ENCODE measurements at regions of chr2 and their contacts with region 1.

Region 1: GRCh38 chr2:119579424-119580295 is 35.4 kb downstream of the CFAP221 start:
- DNase-seq: no peak
- H3K4me3 Mint-ChIP-seq: no peak overlapping the region
- H3K27ac Mint-ChIP-seq: no peak overlapping the region
- H3K4me1 Mint-ChIP-seq: no peaks in the 10 kb centered on the region
- H3K27me3 Mint-ChIP-seq: no peaks in the 10 kb centered on the region
- CTCF ChIP-seq: no peak

Region 2: DNA sequence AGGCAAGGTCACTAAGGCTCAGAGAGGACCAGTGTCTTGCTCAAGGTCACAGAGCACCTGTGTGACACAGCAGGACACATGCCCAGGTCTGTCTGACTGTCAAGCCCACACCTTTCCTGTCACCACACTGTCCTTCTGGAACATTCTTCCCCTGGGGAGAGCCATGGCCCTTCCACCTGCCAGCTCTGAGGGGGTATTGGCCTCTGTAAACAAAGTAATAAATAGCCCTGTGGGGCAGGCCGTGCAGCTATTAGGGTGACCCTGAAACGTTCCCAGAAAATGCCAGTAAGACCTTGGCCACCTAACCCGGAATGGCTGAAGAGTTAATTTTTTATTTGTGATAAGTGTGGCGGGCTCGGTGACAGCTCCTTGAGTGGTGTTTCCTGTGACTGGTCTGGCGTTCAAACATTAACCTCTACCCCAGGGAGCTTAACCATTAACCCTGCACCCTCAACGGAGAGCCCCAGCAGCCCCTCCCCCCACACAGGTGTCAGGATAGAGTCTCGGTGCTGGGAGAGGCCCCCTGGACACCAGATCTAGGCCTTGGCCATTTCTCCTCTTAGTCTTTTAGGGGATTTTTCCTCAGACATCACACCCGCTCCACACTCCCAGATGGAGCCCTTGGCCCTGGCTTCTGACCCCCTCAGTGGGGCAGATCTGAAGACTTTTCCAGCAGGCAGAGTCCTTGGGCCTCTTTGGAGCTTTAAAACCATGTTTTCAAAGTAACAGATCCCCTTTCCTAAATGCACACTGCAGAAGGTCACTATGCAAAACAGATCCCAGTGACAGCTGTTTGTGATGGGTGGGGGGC is 92.0 kb before region 1 on chr2:
- CTCF ChIA-PET with region 1: no interaction called
- intact Hi-C with region 1: no loop called
- DNase-seq: peak; percentile 87
- H3K4me3 Mint-ChIP-seq: peak overlapping the region; percentile 39
- H3K27ac Mint-ChIP-seq: peak overlapping the region; percentile 58
- H3K4me1 Mint-ChIP-seq: peaks cover 91% of the 10 kb centered on the region
- H3K27me3 Mint-ChIP-seq: no peaks in the 10 kb centered on the region
- CTCF ChIP-seq: no peak

Region 3: DNA sequence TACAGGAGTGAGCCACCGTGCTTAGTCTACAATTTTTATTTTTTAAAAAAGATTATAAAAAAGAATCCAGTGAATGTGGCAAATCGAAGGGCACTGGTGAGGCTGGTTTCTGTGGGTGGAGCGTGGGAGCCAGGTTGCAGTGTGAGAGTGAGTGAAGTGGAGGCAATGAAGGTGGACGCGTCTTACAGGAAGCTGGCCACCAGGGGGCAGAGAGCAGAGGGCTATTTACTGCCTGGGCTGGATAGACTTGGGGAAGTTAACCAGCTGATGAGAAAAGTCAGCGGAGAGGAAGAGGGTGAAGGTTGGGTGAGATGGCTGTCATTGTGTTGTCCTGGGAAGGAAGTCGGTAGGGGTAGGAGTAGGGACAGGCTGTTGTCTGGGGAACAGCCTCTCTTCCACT is 62.2 kb before region 1 on chr2:
- CTCF ChIA-PET with region 1: no interaction called
- intact Hi-C with region 1: loop called (anchors 10 kb)
- DNase-seq: peak; percentile 75
- H3K4me3 Mint-ChIP-seq: no peak overlapping the region
- H3K27ac Mint-ChIP-seq: no peak overlapping the region
- H3K4me1 Mint-ChIP-seq: no peaks in the 10 kb centered on the region
- H3K27me3 Mint-ChIP-seq: peaks cover 13% of the 10 kb centered on the region
- CTCF ChIP-seq: peak; percentile 80

Measured in Calu3 (cell line).